ENCODE measurements at regions of chr9 and their contacts with region 1.

Region 1: GRCh38 chr9:36407122-36407723 is 7.2 kb upstream of the RNF38 start:
- DNase-seq: peak; percentile 59 to 68
- ATAC-seq: peak; percentile 95 to 98
- H3K4me3 ChIP-seq: no peak overlapping the region
- H3K27ac ChIP-seq: no peak overlapping the region
- H3K4me1 ChIP-seq: peaks cover 6% of the 10 kb centered on the region; the same call in 1 of the 3 replicates
- CTCF ChIP-seq: peak; percentile 94
- EP300 ChIP-seq: no peak
- POLR2A ChIP-seq: no peak
- RAD21 ChIP-seq: peak; percentile 95 to 96

Region 2: DNA sequence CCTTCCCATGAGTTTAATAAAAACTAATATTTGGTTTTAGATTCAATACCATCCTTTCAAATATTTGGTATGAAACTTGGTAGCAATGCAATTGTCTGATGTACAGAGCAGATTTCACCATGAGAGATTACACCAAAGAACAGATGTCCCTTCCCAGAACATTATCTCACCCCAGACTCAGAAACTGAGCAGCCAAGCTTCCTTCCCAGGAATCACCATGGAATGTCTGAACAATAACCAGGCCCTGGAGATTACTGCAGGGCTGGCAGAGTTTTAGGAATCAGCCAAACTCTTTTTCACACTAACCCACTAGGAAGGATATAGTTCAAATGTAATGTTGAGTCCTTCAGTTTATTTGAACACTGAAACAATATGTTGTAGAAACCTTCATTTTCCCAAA is 192.7 kb before region 1 on chr9:
- CTCF ChIA-PET with region 1: no interaction called
- POLR2A ChIA-PET with region 1: no interaction called
- DNase-seq: no peak
- ATAC-seq: no peak
- H3K4me3 ChIP-seq: no peak overlapping the region
- H3K27ac ChIP-seq: no peak overlapping the region
- H3K4me1 ChIP-seq: 0 out of 3 replicates have a peak, but pooled peaks cover 4% of the 10 kb centered on the region
- CTCF ChIP-seq: no peak
- EP300 ChIP-seq: no peak
- POLR2A ChIP-seq: no peak
- RAD21 ChIP-seq: no peak

Region 3: GRCh38 chr9:36392489-36392888 is 14.7 kb before region 1 on chr9:
- CTCF ChIA-PET with region 1: interaction called, 13 read pairs
- POLR2A ChIA-PET with region 1: no interaction called
- DNase-seq: no peak
- ATAC-seq: no peak
- H3K4me3 ChIP-seq: no peak overlapping the region
- H3K27ac ChIP-seq: no peak overlapping the region
- H3K4me1 ChIP-seq: peaks cover 17% of the 10 kb centered on the region
- CTCF ChIP-seq: no peak
- EP300 ChIP-seq: no peak
- POLR2A ChIP-seq: no peak
- RAD21 ChIP-seq: no peak

Region 4: DNA sequence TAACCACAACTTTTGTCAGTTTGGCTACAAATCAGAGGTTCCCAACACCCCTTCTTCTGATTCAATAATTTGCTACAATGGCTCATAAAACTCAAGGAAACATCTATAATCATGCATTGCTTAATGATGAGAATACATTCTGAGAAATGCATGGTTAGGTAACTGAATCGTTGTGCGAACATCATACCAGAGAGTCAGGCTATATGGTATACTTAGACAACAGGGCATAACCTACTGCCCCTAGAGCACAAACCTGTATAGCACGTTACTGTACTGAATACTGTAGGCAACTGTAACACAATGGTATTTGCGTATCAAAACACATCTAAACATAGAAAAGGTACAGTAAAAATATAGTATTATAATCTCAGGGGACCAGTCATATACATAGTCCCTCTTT is 23.9 kb after region 1 on chr9:
- CTCF ChIA-PET with region 1: interaction called, 437 read pairs
- POLR2A ChIA-PET with region 1: no interaction called
- DNase-seq: no peak
- ATAC-seq: peak in 1 of 2 experiments; percentile 57; a peak in 2 of 6 replicates
- H3K4me3 ChIP-seq: no peak overlapping the region
- H3K27ac ChIP-seq: no peak overlapping the region
- H3K4me1 ChIP-seq: no peaks in the 10 kb centered on the region
- CTCF ChIP-seq: no peak
- EP300 ChIP-seq: no peak
- POLR2A ChIP-seq: no peak
- RAD21 ChIP-seq: no peak

Region 5: GRCh38 chr9:36461323-36461722 is 54.1 kb after region 1 on chr9:
- CTCF ChIA-PET with region 1: interaction called, 437 read pairs
- POLR2A ChIA-PET with region 1: no interaction called
- DNase-seq: no peak
- ATAC-seq: no peak
- H3K4me3 ChIP-seq: no peak overlapping the region
- H3K27ac ChIP-seq: no peak overlapping the region
- H3K4me1 ChIP-seq: no peaks in the 10 kb centered on the region
- CTCF ChIP-seq: no peak
- EP300 ChIP-seq: no peak
- POLR2A ChIP-seq: no peak
- RAD21 ChIP-seq: no peak

Region 6: GRCh38 chr9:36560857-36561221 is 153.6 kb after region 1 on chr9:
- CTCF ChIA-PET with region 1: interaction called, 227 read pairs
- POLR2A ChIA-PET with region 1: no interaction called
- DNase-seq: no peak
- ATAC-seq: no peak; a peak in 1 of 6 replicates
- H3K4me3 ChIP-seq: no peak overlapping the region
- H3K27ac ChIP-seq: no peak overlapping the region
- H3K4me1 ChIP-seq: peaks cover 4% of the 10 kb centered on the region; the same call in 1 of the 3 replicates
- CTCF ChIP-seq: no peak
- EP300 ChIP-seq: no peak
- POLR2A ChIP-seq: no peak
- RAD21 ChIP-seq: no peak

Region 7: GRCh38 chr9:36597412-36598178 is 190.4 kb after region 1 on chr9:
- CTCF ChIA-PET with region 1: interaction called, 12 read pairs
- POLR2A ChIA-PET with region 1: no interaction called
- DNase-seq: peak; percentile 73 to 78
- ATAC-seq: peak; percentile 97 to 99
- H3K4me3 ChIP-seq: no peak overlapping the region
- H3K27ac ChIP-seq: no peak overlapping the region
- H3K4me1 ChIP-seq: no peaks in the 10 kb centered on the region
- CTCF ChIP-seq: peak; percentile 57
- EP300 ChIP-seq: no peak
- POLR2A ChIP-seq: no peak
- RAD21 ChIP-seq: peak; percentile 18 to 27; a peak in 2 of 5 replicates

Region 8: GRCh38 chr9:36721846-36722572 is 314.8 kb after region 1 on chr9:
- CTCF ChIA-PET with region 1: interaction called, 15 read pairs
- POLR2A ChIA-PET with region 1: no interaction called
- DNase-seq: no peak
- ATAC-seq: no peak
- H3K4me3 ChIP-seq: no peak overlapping the region
- H3K27ac ChIP-seq: no peak overlapping the region
- H3K4me1 ChIP-seq: no peaks in the 10 kb centered on the region
- CTCF ChIP-seq: no peak
- EP300 ChIP-seq: no peak
- POLR2A ChIP-seq: no peak
- RAD21 ChIP-seq: no peak